Mucosa of descending colon (tissue), 3 donors: ENCODE measurements at regions of chr3 and their contacts with region 1.

Region 1: GRCh38 chr3:130892759-130893375 is 1.0 kb upstream of the ATP2C1 start:
- DNase-seq: peak in 1 of 3 donors; percentile 92
- ATAC-seq: peak; percentile 74
- H3K4me3 ChIP-seq: peak overlapping the region; percentile 90
- H3K4me1 ChIP-seq: no peaks in the 10 kb centered on the region
- CTCF ChIP-seq: peak; percentile 68

Region 2: GRCh38 chr3:130746246-130747039 is 146.4 kb before region 1 on chr3 and contains the start of gene PIK3R4:
- intact Hi-C with region 1: loop called in 1 of 2 experiments (anchors 5 kb)
- DNase-seq: peak; percentile 92 to 99 (median 92)
- ATAC-seq: peak; percentile 97
- H3K4me3 ChIP-seq: peak within 1 kb of the TSS; percentile 78
- H3K4me1 ChIP-seq: peaks cover 19% of the 10 kb centered on the region
- CTCF ChIP-seq: no peak
- total RNA-seq, gene PIK3R4: 20.1 to 27.5 (median 23.6) TPM

Region 3: DNA sequence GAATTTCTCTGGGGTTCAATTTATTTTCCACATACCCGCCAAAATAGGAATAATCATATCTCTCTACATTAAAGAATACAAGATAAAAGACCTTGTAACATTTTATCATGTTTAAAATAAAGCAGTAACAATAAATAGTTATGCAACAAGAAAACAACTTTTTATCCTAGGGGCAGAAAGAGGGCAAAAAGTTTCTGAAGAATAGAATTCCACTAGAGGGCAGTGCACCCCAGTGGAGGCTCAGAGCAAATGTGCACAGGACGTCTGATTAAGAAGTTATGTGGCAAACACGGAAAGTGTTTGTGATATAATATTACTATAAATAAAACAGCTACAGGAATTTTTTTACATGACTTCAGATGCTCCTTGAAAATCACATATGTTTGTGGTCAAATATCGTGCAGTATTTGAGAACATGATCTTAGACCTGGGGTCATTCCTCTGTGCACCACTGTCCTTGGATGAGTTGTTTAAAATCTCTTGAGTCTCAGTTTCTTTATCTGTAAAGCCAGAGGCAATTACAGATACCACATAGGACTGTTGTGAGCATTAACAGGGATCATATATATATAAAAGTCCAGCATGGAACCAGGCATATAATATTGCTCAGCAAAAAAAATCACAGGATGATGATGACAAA is 133.0 kb before region 1 on chr3:
- intact Hi-C with region 1: loop called (anchors 2 to 5 kb)
- DNase-seq: peak in 1 of 3 donors; percentile 80
- ATAC-seq: peak; percentile 85
- H3K4me3 ChIP-seq: no peak overlapping the region
- H3K4me1 ChIP-seq: no peaks in the 10 kb centered on the region
- CTCF ChIP-seq: peak; percentile 42